HEK293 (cell line): ENCODE measurements at regions of chr19 and their contacts with region 1.

Region 1: DNA sequence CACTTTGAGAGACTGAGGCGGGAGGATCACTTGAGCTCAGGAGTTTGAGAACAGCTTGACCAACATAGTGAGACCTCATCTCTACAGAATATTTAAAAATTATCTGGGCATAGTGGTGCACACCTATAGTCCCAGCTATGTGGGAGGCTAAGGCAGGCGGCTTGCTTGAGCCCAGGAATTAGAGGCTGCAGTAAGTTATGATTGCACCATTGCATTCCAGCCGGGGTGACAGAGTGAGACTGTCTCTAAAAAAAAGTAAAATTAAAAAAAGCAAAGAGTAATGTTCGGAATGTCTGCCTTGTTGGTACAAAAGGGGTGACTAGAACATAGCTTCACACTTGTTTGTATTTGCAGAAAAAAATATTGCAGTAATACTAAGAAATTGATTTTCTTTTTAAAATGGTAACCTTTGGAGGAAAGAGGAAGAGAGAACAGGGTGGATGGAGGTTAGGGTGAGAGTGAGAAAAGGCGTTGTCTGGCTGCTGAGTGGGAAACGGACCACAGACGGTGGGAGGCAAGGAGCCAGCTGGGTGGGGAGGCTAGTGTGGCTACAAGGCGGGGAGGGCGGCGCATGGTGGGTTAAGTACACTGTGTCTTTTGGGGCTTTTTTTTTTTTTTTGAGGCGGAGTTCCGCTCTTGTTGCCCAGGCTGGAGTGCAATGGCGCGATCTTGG is 10.2 kb downstream of the PPP1R14A start:
- H3K4me3 ChIP-seq: no peak overlapping the region
- H3K27ac ChIP-seq: no peak overlapping the region
- H3K4me1 ChIP-seq: peaks cover 6% of the 10 kb centered on the region; the same call in 1 of the 2 replicates
- CTCF ChIP-seq: no peak

Region 2: GRCh38 chr19:38229585-38230073 is 16.3 kb before region 1 on chr19:
- CTCF ChIA-PET with region 1: interaction called, 138 read pairs
- POLR2A ChIA-PET with region 1: interaction called, 10 read pairs
- H3K4me3 ChIP-seq: peak overlapping the region; percentile 40
- H3K27ac ChIP-seq: no peak overlapping the region
- H3K4me1 ChIP-seq: peaks cover 10% of the 10 kb centered on the region
- CTCF ChIP-seq: peak; percentile 51

Region 3: DNA sequence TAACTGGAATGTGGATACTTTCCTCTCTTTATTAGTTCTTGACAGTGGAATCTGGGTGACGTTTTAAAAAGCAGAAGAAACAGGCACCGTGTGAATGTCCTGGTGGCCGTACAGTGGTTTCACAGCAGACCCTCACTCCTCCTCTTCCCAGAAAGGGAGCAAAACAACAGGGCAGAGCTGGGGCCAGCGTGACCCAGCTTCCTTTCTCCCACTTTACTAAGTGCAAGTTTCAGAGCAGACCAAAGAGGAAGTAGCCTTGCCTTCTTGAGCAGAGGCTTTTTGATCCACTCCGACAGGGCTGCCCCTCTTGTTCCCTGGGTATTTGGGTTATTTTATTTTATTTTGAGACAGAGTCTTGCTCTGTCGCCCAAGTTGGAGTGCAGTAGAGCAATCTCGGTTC is 38.5 kb after region 1 on chr19:
- CTCF ChIA-PET with region 1: interaction called, 13 read pairs
- POLR2A ChIA-PET with region 1: no interaction called
- H3K4me3 ChIP-seq: no peak overlapping the region
- H3K27ac ChIP-seq: no peak overlapping the region
- H3K4me1 ChIP-seq: peaks cover 7% of the 10 kb centered on the region
- CTCF ChIP-seq: no peak